ENCODE measurements at regions of chr5 and their contacts with region 1.

Region 1: DNA sequence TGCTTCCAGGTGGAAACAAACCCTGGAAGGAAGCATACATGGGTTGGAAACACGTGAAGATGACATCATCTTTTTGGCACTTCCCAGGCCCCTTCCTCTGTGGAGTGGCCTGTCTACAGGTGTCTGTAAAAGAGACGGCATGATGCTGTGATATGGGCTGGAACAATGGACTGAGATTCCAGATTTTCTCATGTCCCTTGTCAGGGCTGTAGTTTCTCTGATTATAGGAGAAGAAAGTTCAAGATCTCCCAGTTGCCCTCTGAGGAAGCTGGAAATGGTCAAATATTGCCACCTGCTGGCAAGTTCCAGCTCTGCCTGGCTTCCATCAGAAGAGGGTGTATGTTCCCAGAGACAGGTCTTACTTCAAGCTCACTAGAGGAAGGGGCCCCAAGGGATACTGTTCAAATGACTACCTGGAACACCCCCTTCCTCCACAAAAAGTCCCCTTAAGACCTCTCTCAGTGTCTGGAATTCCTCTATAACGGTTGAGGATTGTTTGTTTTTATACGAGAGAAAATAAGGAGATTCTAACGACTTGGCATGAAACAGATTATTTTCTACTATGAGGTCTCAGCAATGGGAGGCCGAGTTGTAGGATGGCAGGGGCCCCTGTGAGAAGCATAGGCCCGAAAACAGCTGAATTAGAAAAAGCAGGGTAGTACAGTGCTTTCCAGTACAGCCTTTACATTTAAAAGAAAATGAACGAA is 7.3 kb upstream of the ANXA6 start:
- DNase-seq: peak; percentile 91
- H3K4me3 Mint-ChIP-seq: no peak overlapping the region
- H3K27ac Mint-ChIP-seq: no peak overlapping the region
- H3K4me1 Mint-ChIP-seq: no peaks in the 10 kb centered on the region
- H3K27me3 Mint-ChIP-seq: peaks cover 15% of the 10 kb centered on the region
- CTCF ChIP-seq: peak; percentile 96

Region 2: DNA sequence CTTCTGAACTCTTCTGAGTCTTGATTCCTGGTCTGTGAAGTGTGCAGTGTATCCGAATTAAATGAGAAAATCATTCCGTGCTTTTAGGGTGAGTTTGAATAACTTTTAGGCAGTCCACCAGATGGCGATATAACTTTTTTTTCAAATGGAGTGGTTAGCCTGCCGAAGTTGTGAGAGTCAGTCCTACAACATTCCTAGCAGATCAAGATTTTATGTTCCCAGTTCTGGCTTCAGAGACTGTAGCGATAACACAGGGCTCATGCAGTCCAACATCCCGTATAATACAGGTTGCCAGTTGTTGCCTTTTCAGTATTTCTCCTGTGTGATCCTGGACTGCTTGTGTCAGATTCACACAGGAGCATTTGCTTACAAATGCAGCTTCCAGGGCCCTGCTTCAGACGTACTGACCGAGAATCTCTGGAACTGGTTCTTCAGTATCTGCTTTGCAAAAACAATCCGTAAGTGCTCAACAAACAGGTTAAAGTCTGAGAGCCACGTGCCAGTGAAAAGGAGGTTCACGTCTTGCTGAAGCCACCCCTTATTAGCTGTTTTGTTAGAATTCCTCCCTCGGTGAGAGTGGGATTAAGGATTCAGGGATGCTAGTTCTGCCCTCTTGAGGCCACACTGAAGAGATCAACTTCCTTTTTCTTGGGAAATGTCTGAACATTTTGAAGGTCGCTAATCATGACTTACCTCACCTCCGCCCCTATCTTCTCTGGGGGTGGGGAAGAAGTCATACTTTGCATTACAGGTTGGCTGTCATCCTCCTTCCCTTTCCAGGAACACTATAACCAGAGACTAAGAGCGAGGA is 363.5 kb before region 1 on chr5:
- CTCF ChIA-PET with region 1: interaction called, 23 read pairs
- POLR2A ChIA-PET with region 1: no interaction called
- intact Hi-C with region 1: loop called (anchors 1 kb)
- DNase-seq: peak; percentile 87
- H3K4me3 Mint-ChIP-seq: peak overlapping the region; percentile 64
- H3K27ac Mint-ChIP-seq: peak overlapping the region; percentile 36
- H3K4me1 Mint-ChIP-seq: peaks cover 14% of the 10 kb centered on the region
- H3K27me3 Mint-ChIP-seq: no peaks in the 10 kb centered on the region
- CTCF ChIP-seq: peak; percentile 68

Region 3: DNA sequence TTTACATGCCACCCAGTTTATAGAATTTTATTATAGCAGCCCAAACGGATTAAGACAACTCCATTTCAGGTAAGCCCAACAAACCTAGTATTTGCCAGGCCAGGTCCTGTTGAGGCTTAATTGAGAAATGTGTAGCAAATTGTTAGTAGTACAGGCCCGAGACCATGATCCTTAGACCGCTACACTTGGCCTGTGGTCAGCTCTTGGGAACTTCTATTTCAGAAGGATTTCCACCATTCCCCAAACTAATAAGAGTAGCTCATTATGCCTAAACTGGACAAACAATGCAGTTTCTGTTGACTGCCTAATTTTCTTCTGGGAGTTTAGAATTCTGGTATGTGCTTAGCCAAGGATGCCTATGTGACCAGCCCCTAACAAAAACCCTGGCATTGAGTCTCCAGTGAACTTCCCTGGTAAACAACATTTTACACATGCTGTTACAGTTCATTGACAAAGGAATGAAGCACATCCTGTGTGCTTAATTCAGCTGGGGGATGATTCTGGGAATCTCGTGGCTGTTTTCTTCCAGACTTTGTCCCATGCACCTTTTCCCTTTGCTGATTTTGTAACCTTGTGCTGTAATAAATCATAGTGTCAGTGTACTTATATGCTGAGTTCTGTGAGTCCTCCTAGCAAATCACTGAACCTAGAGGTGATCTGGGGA is 150.0 kb before region 1 on chr5:
- CTCF ChIA-PET with region 1: interaction called, 21 read pairs
- POLR2A ChIA-PET with region 1: no interaction called
- intact Hi-C with region 1: no loop called
- DNase-seq: no peak
- H3K4me3 Mint-ChIP-seq: no peak overlapping the region
- H3K27ac Mint-ChIP-seq: no peak overlapping the region
- H3K4me1 Mint-ChIP-seq: no peaks in the 10 kb centered on the region
- H3K27me3 Mint-ChIP-seq: peaks cover 13% of the 10 kb centered on the region
- CTCF ChIP-seq: no peak

Region 4: GRCh38 chr5:151107738-151108508 is 56.9 kb before region 1 on chr5:
- CTCF ChIA-PET with region 1: interaction called, 13 read pairs
- POLR2A ChIA-PET with region 1: no interaction called
- intact Hi-C with region 1: no loop called
- DNase-seq: peak; percentile 76
- H3K4me3 Mint-ChIP-seq: no peak overlapping the region
- H3K27ac Mint-ChIP-seq: no peak overlapping the region
- H3K4me1 Mint-ChIP-seq: peaks cover 36% of the 10 kb centered on the region
- H3K27me3 Mint-ChIP-seq: no peaks in the 10 kb centered on the region
- CTCF ChIP-seq: no peak

Region 5: GRCh38 chr5:151183451-151184245 is 18.8 kb after region 1 on chr5:
- CTCF ChIA-PET with region 1: interaction called, 46 read pairs
- POLR2A ChIA-PET with region 1: no interaction called
- intact Hi-C with region 1: no loop called
- DNase-seq: no peak
- H3K4me3 Mint-ChIP-seq: no peak overlapping the region
- H3K27ac Mint-ChIP-seq: no peak overlapping the region
- H3K4me1 Mint-ChIP-seq: no peaks in the 10 kb centered on the region
- H3K27me3 Mint-ChIP-seq: no peaks in the 10 kb centered on the region
- CTCF ChIP-seq: no peak

Region 6: GRCh38 chr5:151239237-151239861 is 74.5 kb after region 1 on chr5:
- CTCF ChIA-PET with region 1: interaction called, 98 read pairs
- POLR2A ChIA-PET with region 1: interaction called, 3 read pairs
- intact Hi-C with region 1: loop called (anchors 1 kb)
- DNase-seq: peak; percentile 83
- H3K4me3 Mint-ChIP-seq: no peak overlapping the region
- H3K27ac Mint-ChIP-seq: peak overlapping the region; percentile 20
- H3K4me1 Mint-ChIP-seq: peaks cover 4% of the 10 kb centered on the region
- H3K27me3 Mint-ChIP-seq: no peaks in the 10 kb centered on the region
- CTCF ChIP-seq: peak; percentile 98

Measured in MCF 10A (cell line).